Calu3 (cell line): ENCODE measurements at regions of chr12 and their contacts with region 1.

Region 1: GRCh38 chr12:69359531-69360347 is at the start of gene YEATS4:
- DNase-seq: peak; percentile 93
- H3K4me3 Mint-ChIP-seq: peak within 1 kb of the TSS; percentile 79
- H3K27ac Mint-ChIP-seq: peak within 1 kb of the TSS; percentile 83
- H3K4me1 Mint-ChIP-seq: peaks cover 33% of the 10 kb centered on the region
- H3K27me3 Mint-ChIP-seq: no peaks in the 10 kb centered on the region
- CTCF ChIP-seq: no peak
- total RNA-seq, gene YEATS4: 34.9 and 38.9 TPM in 2 replicates

Region 2: GRCh38 chr12:68623984-68624383 is 735.8 kb before region 1 on chr12:
- CTCF ChIA-PET with region 1: no interaction called
- intact Hi-C with region 1: no loop called
- DNase-seq: no peak
- H3K4me3 Mint-ChIP-seq: no peak overlapping the region
- H3K27ac Mint-ChIP-seq: no peak overlapping the region
- H3K4me1 Mint-ChIP-seq: peaks cover 38% of the 10 kb centered on the region
- H3K27me3 Mint-ChIP-seq: no peaks in the 10 kb centered on the region
- CTCF ChIP-seq: no peak

Region 3: GRCh38 chr12:68958322-68958721 is 401.4 kb before region 1 on chr12:
- CTCF ChIA-PET with region 1: no interaction called
- intact Hi-C with region 1: no loop called
- DNase-seq: no peak
- H3K4me3 Mint-ChIP-seq: no peak overlapping the region
- H3K27ac Mint-ChIP-seq: no peak overlapping the region
- H3K4me1 Mint-ChIP-seq: peaks cover 14% of the 10 kb centered on the region
- H3K27me3 Mint-ChIP-seq: no peaks in the 10 kb centered on the region
- CTCF ChIP-seq: no peak

Region 4: GRCh38 chr12:69254046-69254445 is 105.7 kb before region 1 on chr12:
- CTCF ChIA-PET with region 1: no interaction called
- intact Hi-C with region 1: no loop called
- DNase-seq: no peak
- H3K4me3 Mint-ChIP-seq: no peak overlapping the region
- H3K27ac Mint-ChIP-seq: peak overlapping the region; percentile 19
- H3K4me1 Mint-ChIP-seq: peaks cover 36% of the 10 kb centered on the region
- H3K27me3 Mint-ChIP-seq: no peaks in the 10 kb centered on the region
- CTCF ChIP-seq: peak; percentile 41

Region 5: GRCh38 chr12:69290545-69291277 is 69.0 kb before region 1 on chr12:
- CTCF ChIA-PET with region 1: interaction called, 14 read pairs
- intact Hi-C with region 1: loop called (anchors 2 kb)
- DNase-seq: peak; percentile 88
- H3K4me3 Mint-ChIP-seq: no peak overlapping the region
- H3K27ac Mint-ChIP-seq: no peak overlapping the region
- H3K4me1 Mint-ChIP-seq: peaks cover 11% of the 10 kb centered on the region
- H3K27me3 Mint-ChIP-seq: no peaks in the 10 kb centered on the region
- CTCF ChIP-seq: peak; percentile 99

Region 6: GRCh38 chr12:69330475-69331473 is 29.0 kb before region 1 on chr12:
- CTCF ChIA-PET with region 1: interaction called, 18 read pairs
- intact Hi-C with region 1: no loop called
- DNase-seq: peak; percentile 49
- H3K4me3 Mint-ChIP-seq: peak overlapping the region; percentile 82
- H3K27ac Mint-ChIP-seq: peak overlapping the region; percentile 90
- H3K4me1 Mint-ChIP-seq: peaks cover 51% of the 10 kb centered on the region
- H3K27me3 Mint-ChIP-seq: no peaks in the 10 kb centered on the region
- CTCF ChIP-seq: no peak

Region 7: GRCh38 chr12:69639400-69640016 is 279.8 kb after region 1 on chr12:
- CTCF ChIA-PET with region 1: interaction called, 15 read pairs
- intact Hi-C with region 1: loop called (anchors 1 kb)
- DNase-seq: peak; percentile 75
- H3K4me3 Mint-ChIP-seq: no peak overlapping the region
- H3K27ac Mint-ChIP-seq: no peak overlapping the region
- H3K4me1 Mint-ChIP-seq: no peaks in the 10 kb centered on the region
- H3K27me3 Mint-ChIP-seq: no peaks in the 10 kb centered on the region
- CTCF ChIP-seq: peak; percentile 79